Endothelial cell of umbilical vein (primary cell): ENCODE measurements at regions of chr6 and their contacts with region 1.

Region 1: DNA sequence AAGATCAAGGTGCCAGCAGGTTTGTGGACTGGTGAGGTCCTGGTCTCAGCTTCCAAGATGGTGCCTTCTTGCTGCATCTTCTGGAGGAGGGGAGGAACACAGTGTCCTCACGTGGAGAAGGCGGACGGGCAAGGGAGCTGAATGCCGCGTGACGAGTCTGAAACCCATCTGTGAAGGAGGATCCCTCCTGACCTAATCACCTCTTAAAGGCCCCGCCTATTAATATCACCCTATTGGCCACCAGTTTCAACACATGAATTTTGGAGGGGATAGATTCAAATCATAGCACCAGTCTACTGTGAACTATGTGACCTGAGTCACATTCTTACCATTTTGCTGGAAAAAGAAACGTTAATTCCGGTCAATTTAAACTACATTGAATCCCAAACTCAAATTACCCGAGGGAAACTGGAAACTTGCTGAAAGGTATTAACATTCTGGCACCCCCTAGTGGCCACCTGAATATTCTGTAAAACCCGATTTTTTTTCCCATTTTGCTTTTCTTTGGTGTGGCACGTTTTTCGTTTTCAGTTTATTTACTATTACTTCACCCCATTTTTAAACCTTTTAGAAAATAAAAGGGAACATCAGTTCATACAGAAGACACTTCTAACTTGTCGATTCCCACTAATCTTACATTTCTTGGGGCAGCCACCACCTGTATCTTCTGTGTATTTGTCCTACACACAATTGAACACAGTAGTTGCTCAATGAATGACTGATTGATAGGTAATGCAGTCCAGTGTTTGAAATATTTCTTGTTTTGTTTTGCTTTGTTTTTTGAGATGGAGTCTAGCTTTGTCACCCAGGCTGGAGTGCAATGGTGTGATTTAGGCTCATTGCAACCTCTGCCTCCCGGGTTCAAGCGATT is 17.9 kb upstream of the CCDC170 start:
- DNase-seq: peak; percentile 50
- H3K4me3 ChIP-seq: no peak overlapping the region
- H3K27ac ChIP-seq: no peak overlapping the region
- H3K4me1 ChIP-seq: peaks cover 2% of the 10 kb centered on the region
- H3K27me3 ChIP-seq: no peaks in the 10 kb centered on the region
- CTCF ChIP-seq: peak; percentile 53 to 62
- POLR2A ChIP-seq: no peak

Region 2: DNA sequence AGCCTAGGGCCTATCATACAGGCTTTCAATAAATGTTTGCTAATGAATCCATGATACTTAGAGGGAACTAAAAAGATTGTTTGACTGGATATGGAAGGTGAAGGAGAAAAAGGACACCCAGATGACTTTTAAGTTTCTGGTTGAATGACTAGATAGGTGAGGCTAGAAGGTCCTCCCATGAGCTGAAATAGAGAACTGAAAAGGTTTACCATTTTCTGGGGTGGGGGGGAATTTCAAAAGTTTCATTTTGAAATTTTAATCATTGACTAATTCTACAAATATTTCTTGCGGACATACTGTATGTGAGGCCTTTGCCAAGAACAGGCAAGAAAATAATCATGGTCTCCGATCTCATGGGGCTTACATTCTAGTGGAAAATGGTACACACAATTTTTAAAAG is 66.6 kb before region 1 on chr6:
- CTCF ChIA-PET with region 1: no interaction called
- POLR2A ChIA-PET with region 1: no interaction called
- dilution Hi-C with region 1: no loop called
- intact Hi-C with region 1: loop called (anchors 1 kb)
- DNase-seq: no peak
- H3K4me3 ChIP-seq: no peak overlapping the region
- H3K27ac ChIP-seq: no peak overlapping the region
- H3K4me1 ChIP-seq: no peaks in the 10 kb centered on the region
- H3K27me3 ChIP-seq: no peaks in the 10 kb centered on the region
- CTCF ChIP-seq: no peak
- POLR2A ChIP-seq: no peak

Region 3: DNA sequence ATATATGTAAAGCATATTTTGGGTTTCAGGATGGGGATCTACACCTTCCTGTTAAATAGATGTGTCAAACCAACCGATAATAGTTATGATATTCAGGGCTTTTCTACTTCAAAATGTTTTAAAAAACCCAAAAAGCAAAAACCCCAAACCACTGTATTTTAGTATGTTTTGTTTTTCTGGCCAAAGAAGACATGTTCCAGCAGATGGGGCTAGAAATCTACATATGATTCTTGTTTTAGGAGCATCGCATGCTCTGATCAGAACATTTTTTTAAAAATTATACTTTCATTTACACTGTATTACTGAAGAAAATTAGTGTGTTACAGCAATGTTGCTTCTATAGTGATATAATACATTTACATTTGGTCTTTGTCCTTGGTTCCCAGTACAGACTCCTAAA is 35.0 kb before region 1 on chr6:
- CTCF ChIA-PET with region 1: interaction called, 5 read pairs
- POLR2A ChIA-PET with region 1: no interaction called
- dilution Hi-C with region 1: no loop called
- intact Hi-C with region 1: loop called (anchors 2 kb)
- DNase-seq: peak; percentile 30
- H3K4me3 ChIP-seq: no peak overlapping the region
- H3K27ac ChIP-seq: no peak overlapping the region
- H3K4me1 ChIP-seq: peaks cover 18% of the 10 kb centered on the region
- H3K27me3 ChIP-seq: no peaks in the 10 kb centered on the region
- CTCF ChIP-seq: peak in 1 of 2 donors; percentile 5
- POLR2A ChIP-seq: no peak

Region 4: GRCh38 chr6:151506761-151507160 is 30.9 kb after region 1 on chr6:
- CTCF ChIA-PET with region 1: no interaction called
- POLR2A ChIA-PET with region 1: no interaction called
- dilution Hi-C with region 1: no loop called
- intact Hi-C with region 1: no loop called
- DNase-seq: no peak
- H3K4me3 ChIP-seq: no peak overlapping the region
- H3K27ac ChIP-seq: no peak overlapping the region
- H3K4me1 ChIP-seq: peaks cover 9% of the 10 kb centered on the region
- H3K27me3 ChIP-seq: no peaks in the 10 kb centered on the region
- CTCF ChIP-seq: no peak
- POLR2A ChIP-seq: no peak

Region 5: GRCh38 chr6:152146385-152146784 is 670.5 kb after region 1 on chr6:
- CTCF ChIA-PET with region 1: no interaction called
- POLR2A ChIA-PET with region 1: no interaction called
- dilution Hi-C with region 1: no loop called
- intact Hi-C with region 1: no loop called
- DNase-seq: no peak
- H3K4me3 ChIP-seq: no peak overlapping the region
- H3K27ac ChIP-seq: no peak overlapping the region
- H3K4me1 ChIP-seq: no peaks in the 10 kb centered on the region
- H3K27me3 ChIP-seq: no peaks in the 10 kb centered on the region
- CTCF ChIP-seq: no peak
- POLR2A ChIP-seq: no peak